GM23248 (cell line): ENCODE measurements at regions of chr17 and their contacts with region 1.

Region 1: GRCh38 chr17:8986290-8986689 is 20.8 kb upstream of the PIK3R5 start:
- DNase-seq: no peak
- H3K4me3 ChIP-seq: no peak overlapping the region
- H3K27ac ChIP-seq: no peak overlapping the region
- H3K4me1 ChIP-seq: no peaks in the 10 kb centered on the region
- H3K27me3 ChIP-seq: no peaks in the 10 kb centered on the region

Region 2: DNA sequence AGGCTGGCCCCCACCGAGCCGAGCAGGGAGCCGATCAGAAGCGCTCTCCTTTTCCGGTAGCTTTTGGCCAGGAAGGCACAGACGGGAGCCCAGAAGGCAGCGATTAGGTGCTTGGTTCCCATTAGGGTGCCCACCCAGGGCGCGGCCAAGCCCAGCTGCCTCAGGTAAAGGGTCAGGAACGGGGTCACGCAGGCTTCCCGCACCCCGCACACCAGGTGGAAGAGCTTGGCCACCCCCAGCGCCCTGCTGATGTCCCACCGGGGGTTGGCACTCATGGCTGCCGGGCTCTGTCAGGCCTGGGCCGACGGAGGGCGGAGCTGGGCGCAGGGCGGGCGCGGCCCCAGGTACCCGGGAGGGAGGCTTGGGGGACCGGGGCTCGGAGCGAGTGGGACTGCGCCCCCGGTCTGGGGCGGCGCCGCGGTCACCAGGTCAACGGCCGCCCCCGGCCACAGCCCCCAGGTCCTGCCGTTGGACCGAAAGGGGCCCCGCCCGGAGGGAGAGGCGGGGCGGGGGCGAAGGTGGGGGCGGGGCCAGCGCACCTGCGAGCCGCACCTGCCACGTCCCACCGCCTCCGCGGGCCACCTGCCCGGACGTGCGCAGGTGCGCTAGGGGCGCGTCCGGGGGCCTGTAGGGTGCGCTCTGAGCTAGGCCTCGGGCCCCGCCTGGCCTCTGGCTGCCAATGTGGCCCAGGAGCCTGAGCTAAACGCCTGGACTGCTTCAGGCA is 187.3 kb before region 1 on chr17 and contains the start of gene MFSD6L:
- in situ Hi-C with region 1: no loop called
- DNase-seq: no peak
- H3K4me3 ChIP-seq: no peak within 1 kb of the TSS
- H3K27ac ChIP-seq: no peak within 1 kb of the TSS
- H3K4me1 ChIP-seq: no peaks in the 10 kb centered on the region
- H3K27me3 ChIP-seq: peaks cover 11% of the 10 kb centered on the region; the same call in 1 of the 2 replicates
- total RNA-seq, gene MFSD6L: not detected in 2 replicates

Region 3: GRCh38 chr17:9536061-9536460 is 549.8 kb after region 1 on chr17:
- in situ Hi-C with region 1: loop called (anchors 10 kb)
- DNase-seq: no peak
- H3K4me3 ChIP-seq: no peak overlapping the region
- H3K27ac ChIP-seq: no peak overlapping the region
- H3K4me1 ChIP-seq: no peaks in the 10 kb centered on the region
- H3K27me3 ChIP-seq: no peaks in the 10 kb centered on the region